Tibial artery (tissue), 4 donors: ENCODE measurements at regions of chr18 and their contacts with region 1.

Region 1: GRCh38 chr18:9913526-9914333 is at the start of gene VAPA:
- DNase-seq: peak; percentile 94 to 97
- H3K4me3 ChIP-seq: peak within 1 kb of the TSS; percentile 90 to 99
- H3K27ac ChIP-seq: peak within 1 kb of the TSS; percentile 96 to 100
- H3K4me1 ChIP-seq: peaks cover 0 to 34% (median 21%) of the 10 kb centered on the region in 4 donors
- H3K27me3 ChIP-seq: no peaks in the 10 kb centered on the region
- CTCF ChIP-seq: peak in 1 of 2 experiments; percentile 9

Region 2: GRCh38 chr18:9614401-9615279 is 299.1 kb before region 1 on chr18 and contains the start of gene PPP4R1:
- intact Hi-C with region 1: loop called (anchors 10 kb)
- DNase-seq: peak; percentile 81 to 89
- H3K4me3 ChIP-seq: peak within 1 kb of the TSS; percentile 96 to 98
- H3K27ac ChIP-seq: peak within 1 kb of the TSS; percentile 94 to 99
- H3K4me1 ChIP-seq: peaks cover 0 to 53% (median 21%) of the 10 kb centered on the region in 4 donors
- H3K27me3 ChIP-seq: no peaks in the 10 kb centered on the region
- CTCF ChIP-seq: no peak

Region 3: DNA sequence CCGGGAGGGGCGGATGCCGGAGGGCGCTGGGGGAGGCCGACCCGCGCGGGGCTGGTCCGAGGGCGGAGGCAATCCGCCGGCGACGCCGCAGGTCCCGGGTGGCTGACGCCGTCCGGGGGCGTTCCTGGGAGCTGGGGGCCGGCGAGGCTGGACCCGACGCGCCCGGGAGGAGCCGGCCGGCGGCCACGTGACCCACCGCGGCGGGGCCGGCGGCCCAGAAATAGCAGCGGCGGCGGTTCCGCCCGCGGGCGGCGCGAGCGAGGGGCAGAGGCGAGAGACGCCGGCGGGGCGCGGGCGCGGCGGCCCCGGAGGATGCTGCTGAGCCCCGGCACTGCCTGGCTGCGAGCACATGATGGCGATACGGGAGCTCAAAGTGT is 205.7 kb before region 1 on chr18 and contains the start of gene RAB31:
- intact Hi-C with region 1: loop called (anchors 10 kb)
- DNase-seq: peak; percentile 81 to 95
- H3K4me3 ChIP-seq: peak within 1 kb of the TSS; percentile 94 to 99
- H3K27ac ChIP-seq: peak within 1 kb of the TSS; percentile 93 to 98
- H3K4me1 ChIP-seq: peaks cover 0 to 69% (median 32%) of the 10 kb centered on the region in 4 donors
- H3K27me3 ChIP-seq: no peaks in the 10 kb centered on the region
- CTCF ChIP-seq: no peak

Region 4: DNA sequence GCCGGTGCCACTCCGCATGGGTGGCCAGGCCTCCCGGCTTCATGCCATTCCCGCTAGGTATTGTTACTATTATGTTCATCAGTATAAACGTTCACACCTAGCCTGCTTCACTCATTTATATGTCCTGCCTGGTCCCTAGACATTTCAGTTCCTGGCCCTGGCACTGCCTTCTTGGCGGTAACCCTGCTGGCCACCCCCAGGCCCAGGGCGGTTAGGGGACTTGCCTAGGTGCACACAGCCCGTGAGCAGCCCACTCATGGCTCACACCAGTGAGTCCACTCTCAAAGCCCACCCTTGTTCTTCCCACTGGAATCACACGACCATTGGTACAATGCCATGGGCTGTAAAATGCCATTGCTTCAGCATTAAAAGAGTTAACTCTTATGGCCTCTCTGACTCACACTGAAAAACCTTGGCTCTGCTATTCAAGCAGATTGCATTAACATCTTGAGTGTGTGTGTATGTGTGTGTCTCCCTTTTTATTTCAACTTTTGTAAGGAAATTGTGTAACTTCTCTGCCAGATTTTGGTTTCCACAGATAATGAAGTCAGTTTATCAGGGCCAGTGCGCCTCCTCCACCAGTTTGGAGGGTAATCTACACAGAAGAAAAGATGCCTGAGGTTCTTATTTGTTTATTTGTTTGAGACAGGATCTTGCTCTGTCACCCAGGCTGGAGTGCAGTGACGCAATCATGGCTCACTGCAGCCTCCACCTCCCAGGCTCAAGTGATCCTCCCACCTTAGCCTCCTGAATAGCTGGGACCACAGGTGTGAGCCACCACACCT is 131.5 kb before region 1 on chr18:
- intact Hi-C with region 1: no loop called
- DNase-seq: peak in 1 of 2 donors; percentile 29
- H3K4me3 ChIP-seq: no peak overlapping the region
- H3K27ac ChIP-seq: peak overlapping the region; percentile 9 to 40
- H3K4me1 ChIP-seq: peaks cover 0 to 34% (median 0%) of the 10 kb centered on the region in 4 donors
- H3K27me3 ChIP-seq: no peaks in the 10 kb centered on the region
- CTCF ChIP-seq: no peak

Region 5: DNA sequence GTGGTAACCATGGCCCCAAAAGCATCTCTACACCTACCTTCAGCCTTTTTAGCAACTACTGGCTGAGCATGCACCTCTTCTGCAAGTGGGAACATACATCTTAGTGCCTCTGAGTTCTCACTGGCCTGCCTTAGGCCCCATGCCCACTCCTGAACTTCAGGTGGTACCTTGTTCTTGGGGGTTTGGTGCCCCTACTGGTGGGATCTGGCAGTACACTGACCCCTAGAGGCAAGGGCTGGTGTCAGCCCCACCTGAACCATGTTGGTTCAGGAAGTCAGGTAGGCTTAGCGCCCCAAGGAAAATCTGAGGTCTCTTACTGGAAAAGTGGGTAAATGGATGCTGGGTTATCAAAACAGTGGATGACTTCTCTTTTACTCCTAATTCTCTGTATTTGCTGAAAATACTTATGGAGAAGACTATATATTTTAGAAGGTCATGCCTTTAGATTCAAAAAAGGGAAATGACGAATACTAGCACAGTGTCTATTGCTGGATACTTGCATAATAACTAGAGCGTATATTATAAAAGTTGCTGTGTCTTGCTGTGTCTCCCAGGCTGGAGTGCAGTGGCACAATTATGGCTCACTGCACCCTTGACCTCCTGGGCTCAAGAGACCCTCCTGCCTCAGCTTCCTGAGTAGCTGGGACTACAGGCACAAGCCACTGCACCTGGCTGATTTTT is 121.0 kb before region 1 on chr18:
- intact Hi-C with region 1: no loop called
- DNase-seq: no peak
- H3K4me3 ChIP-seq: no peak overlapping the region
- H3K27ac ChIP-seq: no peak overlapping the region
- H3K4me1 ChIP-seq: peaks cover 0 to 12% (median 0%) of the 10 kb centered on the region in 4 donors
- H3K27me3 ChIP-seq: no peaks in the 10 kb centered on the region
- CTCF ChIP-seq: peak in 1 of 2 experiments; percentile 36

Region 6: DNA sequence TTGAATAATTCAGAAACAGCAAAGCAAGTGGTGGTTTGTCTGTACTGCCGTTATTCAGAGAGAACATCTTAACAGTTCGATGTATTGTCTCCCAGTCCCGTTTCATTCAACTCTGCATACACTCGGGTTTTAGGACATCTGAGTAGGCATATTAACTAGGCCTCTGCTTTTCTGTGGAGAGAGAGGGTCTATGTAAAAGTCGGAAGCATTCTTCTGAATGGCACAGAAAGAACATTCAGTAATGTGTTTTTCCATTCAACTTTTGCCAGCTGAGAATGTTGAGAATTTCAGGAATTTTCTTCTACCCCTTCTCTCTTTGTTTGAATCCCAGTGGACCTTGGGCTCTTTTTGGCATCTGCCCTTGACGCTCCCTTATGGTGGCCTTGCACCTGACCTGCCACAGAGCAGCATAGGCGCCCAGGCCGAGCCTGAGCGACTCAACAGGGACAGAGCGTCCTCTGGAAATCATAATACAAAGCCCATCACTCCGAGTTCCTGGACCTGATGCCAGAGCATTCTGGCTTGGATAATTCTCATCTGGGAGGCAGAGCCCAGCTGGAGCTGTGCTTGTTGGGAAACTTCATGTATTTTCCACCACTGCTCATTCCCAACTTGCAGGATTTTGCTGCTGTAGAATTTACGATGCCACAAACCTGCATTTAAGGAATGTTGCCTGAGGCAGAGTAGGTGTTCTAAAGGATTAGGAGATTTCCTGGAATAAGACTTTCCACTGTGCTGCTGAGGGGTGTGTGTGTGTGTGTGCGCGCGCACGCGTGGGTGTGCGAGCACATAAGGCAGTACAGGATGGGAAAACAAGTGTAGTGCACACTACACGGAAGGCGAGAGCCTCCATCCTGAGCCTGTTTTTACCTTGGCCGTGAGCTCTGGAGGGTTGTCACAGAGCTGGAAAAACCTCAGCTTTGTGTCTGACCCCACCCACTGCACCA is 105.2 kb before region 1 on chr18:
- intact Hi-C with region 1: loop called (anchors 10 kb)
- DNase-seq: peak in 1 of 2 donors; percentile 69
- H3K4me3 ChIP-seq: no peak overlapping the region
- H3K27ac ChIP-seq: peak overlapping the region; percentile 65 to 71
- H3K4me1 ChIP-seq: peaks cover 0 to 90% (median 51%) of the 10 kb centered on the region in 4 donors
- H3K27me3 ChIP-seq: no peaks in the 10 kb centered on the region
- CTCF ChIP-seq: no peak

Region 7: DNA sequence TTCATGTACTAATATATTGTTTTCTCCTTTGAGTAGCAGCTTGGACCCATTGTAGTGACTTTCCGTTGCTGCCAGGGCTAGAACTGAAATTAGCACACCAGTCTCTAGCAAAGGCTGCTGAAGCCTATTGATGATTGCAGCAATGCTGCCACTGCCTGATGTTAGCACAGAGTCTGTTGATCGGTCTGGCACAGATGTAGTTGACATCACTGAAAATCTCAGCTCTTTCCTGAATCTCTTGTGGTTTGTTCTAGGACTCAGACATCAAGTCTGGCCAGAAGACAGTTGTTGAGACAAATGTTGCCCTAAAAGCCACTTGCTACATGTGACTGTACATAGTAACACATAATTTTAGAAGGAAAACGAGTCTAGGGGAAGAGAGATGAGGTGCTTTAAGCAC is 47.3 kb after region 1 on chr18:
- intact Hi-C with region 1: no loop called
- DNase-seq: no peak
- H3K4me3 ChIP-seq: no peak overlapping the region
- H3K27ac ChIP-seq: peak overlapping the region in 1 of 2 donors; percentile 28
- H3K4me1 ChIP-seq: peaks cover 0 to 8% (median 0%) of the 10 kb centered on the region in 4 donors
- H3K27me3 ChIP-seq: no peaks in the 10 kb centered on the region
- CTCF ChIP-seq: no peak

Region 8: GRCh38 chr18:11851146-11851805 is 1937.5 kb after region 1 on chr18 and contains the start of gene CHMP1B:
- intact Hi-C with region 1: no loop called
- DNase-seq: peak; percentile 98 to 99
- H3K4me3 ChIP-seq: peak within 1 kb of the TSS; percentile 78 to 87
- H3K27ac ChIP-seq: peak within 1 kb of the TSS; percentile 90 to 91
- H3K4me1 ChIP-seq: peaks cover 0 to 47% (median 21%) of the 10 kb centered on the region in 4 donors
- H3K27me3 ChIP-seq: no peaks in the 10 kb centered on the region
- CTCF ChIP-seq: peak in 1 of 2 experiments; percentile 6